H1 (cell line): ENCODE measurements at regions of chr14 and their contacts with region 1.

Region 1: GRCh38 chr14:93991212-93991611 is 5.9 kb upstream of the CCDC197 start:
- DNase-seq: no peak
- H3K4me3 ChIP-seq: no peak overlapping the region
- H3K27ac ChIP-seq: no peak overlapping the region
- H3K4me1 ChIP-seq: peaks cover 0 to 14% (median 4%) of the 10 kb centered on the region in 4 experiments; a peak in 4 of 7 replicates
- H3K27me3 ChIP-seq: no peaks in the 10 kb centered on the region
- CTCF ChIP-seq: no peak
- EP300 ChIP-seq: no peak
- POLR2A ChIP-seq: no peak
- RAD21 ChIP-seq: no peak

Region 2: DNA sequence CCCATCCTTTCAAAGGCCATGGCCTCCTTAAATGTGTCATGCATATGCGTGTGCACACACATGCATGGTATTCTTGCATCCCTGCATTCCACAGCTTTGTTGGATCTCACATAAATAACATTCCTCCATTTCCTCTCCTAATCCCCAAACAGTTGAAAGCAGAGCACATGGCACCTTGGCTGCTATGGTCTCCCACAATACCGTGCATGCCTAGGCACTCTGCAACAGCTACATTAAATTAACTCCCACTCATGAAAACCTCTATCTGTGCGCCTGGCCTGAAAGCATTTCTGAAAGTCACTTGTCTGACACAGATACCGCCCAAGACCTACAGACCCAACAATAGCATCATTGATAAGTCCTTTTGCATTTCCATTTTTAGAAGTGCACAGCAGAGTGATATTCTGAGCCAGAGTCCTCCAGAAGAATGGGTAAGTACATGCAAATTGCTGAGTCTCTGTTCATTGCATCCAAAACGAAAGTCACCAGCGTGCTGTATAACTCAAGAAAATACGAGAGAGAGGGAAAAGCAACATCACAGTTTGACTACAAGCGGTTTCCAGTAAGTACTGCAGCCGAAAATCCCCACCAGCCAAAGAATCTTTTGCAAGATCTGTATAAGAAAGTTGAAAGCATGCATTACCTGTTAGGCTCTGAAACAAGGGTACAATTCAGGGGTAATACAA is 15.3 kb before region 1 on chr14:
- CTCF ChIA-PET with region 1: interaction called, 108 read pairs
- POLR2A ChIA-PET with region 1: no interaction called
- DNase-seq: no peak
- H3K4me3 ChIP-seq: no peak overlapping the region
- H3K27ac ChIP-seq: no peak overlapping the region; the same call in 1 of the 2 replicates
- H3K4me1 ChIP-seq: peaks cover 0 to 3% (median 0%) of the 10 kb centered on the region in 4 experiments; a peak in 1 of 7 replicates
- H3K27me3 ChIP-seq: no peaks in the 10 kb centered on the region; a peak in 1 of 7 replicates
- CTCF ChIP-seq: no peak
- EP300 ChIP-seq: no peak
- POLR2A ChIP-seq: no peak
- RAD21 ChIP-seq: no peak